Gastrocnemius medialis (tissue), 4 donors: ENCODE measurements at regions of chr7 and their contacts with region 1.

Region 1: DNA sequence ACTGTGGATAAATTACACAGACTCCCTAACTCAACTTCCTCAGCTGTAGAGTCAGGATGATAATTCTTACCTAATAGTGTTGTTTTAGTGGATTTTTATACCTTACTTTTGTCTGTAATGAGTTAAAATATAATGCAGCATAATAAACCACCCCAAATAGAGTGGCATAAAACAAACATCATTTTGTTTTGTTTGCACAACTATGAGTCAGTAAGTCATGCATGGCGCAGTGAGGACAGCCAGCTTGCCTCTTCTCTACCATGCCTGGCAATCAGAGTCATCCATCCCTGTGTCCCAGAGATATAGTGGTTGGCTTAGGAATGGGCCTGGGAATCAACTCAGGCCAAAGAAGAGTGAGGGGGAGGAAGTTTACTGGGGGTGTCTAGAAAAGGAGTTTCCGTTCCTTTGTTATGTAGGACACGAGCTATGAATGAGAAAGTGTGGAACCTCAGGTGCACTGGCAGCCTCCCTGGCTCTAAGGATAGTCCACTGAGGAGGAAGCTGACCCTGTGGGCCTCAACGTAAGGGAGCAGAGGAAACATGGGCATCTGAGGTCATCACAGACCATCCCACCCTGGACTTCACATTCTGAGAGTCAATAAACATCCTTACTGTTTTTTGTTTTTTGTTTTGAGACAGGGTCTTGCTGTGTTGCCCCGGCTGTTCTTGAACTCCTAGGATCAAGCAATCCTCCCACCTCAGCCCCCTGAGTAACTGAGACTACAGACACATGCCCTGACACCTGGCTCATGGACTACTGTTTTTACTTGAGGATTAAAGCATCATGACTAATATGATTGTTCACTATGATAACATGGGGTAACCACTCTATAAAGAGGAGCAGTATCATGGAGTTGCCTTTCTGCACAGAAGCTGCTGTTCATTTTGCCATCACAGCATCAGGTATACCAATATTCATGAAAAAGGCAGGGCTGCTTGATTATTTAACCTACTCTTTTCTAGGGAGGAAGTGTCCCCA is 21.0 kb upstream of the GRB10 start:
- DNase-seq: no peak
- ATAC-seq: no peak
- H3K4me3 ChIP-seq: no peak overlapping the region
- H3K27ac ChIP-seq: no peak overlapping the region
- H3K4me1 ChIP-seq: peaks cover 0 to 11% of the 10 kb centered on the region in 2 donors
- H3K27me3 ChIP-seq: no peaks in the 10 kb centered on the region
- CTCF ChIP-seq: no peak
- POLR2A ChIP-seq: no peak

Region 2: DNA sequence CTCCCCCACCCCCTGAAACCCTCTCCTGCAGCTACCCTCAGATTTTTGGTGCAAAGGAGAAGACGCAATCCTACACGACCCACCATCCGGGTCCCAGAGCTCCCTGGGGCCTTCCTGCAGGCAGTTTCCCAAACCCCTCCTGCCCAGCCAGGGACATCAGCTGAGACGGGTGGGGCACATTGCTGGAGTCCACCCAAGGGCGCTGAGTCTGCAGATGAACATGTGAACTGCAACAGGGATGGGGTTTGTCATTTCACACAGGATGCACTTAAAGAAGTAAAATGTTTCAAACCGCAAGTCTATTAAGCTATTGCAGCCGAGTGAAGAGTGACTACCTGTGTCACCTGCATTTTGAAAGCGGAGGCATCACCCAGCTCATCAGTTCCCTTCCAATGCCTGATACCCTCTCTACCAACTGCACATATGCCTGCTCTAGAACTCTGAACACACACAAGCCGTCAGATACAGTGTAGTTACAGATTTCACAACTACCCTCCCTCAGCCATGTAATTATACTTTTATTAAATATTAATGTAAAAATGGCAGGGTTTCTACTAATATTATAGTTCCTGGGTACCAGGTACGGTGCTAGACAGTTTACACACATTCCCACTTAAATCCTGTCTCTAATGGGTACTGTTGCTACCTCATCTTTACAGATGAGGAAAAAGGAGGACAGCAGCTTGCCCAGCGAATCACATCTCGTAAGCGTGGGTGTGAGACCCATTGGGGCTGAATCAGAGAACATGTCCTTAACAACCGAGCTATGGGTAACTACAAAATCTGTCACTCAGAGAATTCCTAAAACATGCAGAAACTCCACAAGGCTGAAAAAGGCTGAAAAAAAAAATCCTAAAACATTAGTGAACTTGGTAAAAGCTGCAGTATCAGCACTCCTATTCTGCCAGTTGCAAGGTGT is 92.1 kb before region 1 on chr7:
- in situ Hi-C with region 1: no loop called
- intact Hi-C with region 1: loop called (anchors 5 kb)
- DNase-seq: peak; percentile 70 to 84
- ATAC-seq: peak; percentile 81 to 85
- H3K4me3 ChIP-seq: no peak overlapping the region
- H3K27ac ChIP-seq: peak overlapping the region; percentile 33 to 73 (median 59)
- H3K4me1 ChIP-seq: peaks cover 44 to 64% of the 10 kb centered on the region in 2 donors
- H3K27me3 ChIP-seq: no peaks in the 10 kb centered on the region
- CTCF ChIP-seq: no peak
- POLR2A ChIP-seq: no peak